ENCODE measurements at regions of chr15 and their contacts with region 1.

Region 1: DNA sequence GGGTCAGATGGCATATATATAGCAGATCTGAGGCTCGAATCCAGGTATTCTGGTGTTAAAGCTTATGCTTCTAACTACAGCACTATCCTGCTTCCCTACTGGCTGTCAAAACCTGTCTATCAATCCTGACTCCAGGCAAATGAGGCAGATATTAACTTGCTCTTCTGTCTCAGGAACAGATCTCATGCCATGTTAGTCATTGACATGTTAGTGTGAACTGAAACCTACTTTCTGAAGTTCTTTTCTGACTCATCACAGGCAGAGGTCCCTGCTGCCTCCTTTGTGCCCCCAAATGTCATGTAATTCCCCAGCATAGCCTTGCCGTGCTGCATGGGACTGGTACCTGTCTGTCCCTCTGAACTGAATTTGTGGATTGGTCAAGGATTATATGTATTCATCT is 125.0 kb upstream of the SMAD3 start:
- DNase-seq: peak in 1 of 7 donors; percentile 2
- H3K4me3 ChIP-seq: no peak overlapping the region
- H3K27ac ChIP-seq: no peak overlapping the region
- H3K4me1 ChIP-seq: peaks cover 0 to 3% of the 10 kb centered on the region in 2 donors
- H3K27me3 ChIP-seq: no peaks in the 10 kb centered on the region
- CTCF ChIP-seq: no peak
- POLR2A ChIP-seq: no peak

Region 2: DNA sequence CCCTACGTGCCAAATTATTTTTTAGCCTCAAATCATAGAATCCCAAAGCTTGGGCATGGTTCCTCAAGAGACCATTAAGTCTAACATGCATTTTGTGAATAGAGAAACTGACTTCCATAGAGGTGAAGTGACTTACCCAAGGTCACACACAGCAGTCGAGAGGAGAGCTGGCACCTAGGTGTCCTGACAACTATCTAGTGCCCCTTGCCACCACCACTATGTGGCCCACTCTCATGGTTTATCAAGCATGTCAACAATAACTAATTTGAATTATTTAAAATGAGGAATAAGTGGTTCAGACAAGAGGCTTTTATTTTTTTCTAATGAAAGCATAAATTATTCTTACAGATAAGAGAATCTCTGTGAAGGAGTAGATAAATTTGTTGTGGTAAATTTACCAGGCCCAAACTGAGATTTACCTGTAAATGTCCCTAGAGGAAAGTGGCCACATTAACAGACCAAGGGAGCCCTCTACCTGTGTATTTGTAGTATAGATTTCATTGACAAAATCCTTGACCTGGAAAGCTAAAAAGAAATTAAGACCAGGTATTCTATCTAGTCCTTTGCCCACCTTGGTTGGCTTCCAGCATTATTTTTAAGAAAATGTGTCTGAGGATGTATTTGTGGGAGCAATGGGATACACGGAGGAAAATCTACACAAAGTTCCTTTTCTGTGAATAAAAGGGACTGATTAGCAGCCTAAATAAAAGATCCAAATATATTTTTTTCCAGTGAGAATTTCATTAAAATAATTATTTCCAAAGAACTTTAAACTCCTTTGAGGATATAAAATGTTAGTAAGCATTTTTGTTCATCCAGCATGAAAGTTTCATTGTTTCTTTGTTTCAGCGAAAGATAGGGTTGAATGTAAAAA is 363.4 kb after region 1 on chr15:
- intact Hi-C with region 1: loop called (anchors 5 to 10 kb)
- DNase-seq: peak in 3 of 7 donors; percentile 7 to 16 (median 13)
- H3K4me3 ChIP-seq: no peak overlapping the region
- H3K27ac ChIP-seq: no peak overlapping the region
- H3K4me1 ChIP-seq: no peaks in the 10 kb centered on the region
- H3K27me3 ChIP-seq: no peaks in the 10 kb centered on the region
- CTCF ChIP-seq: peak; percentile 13 to 65 (median 56)
- POLR2A ChIP-seq: no peak

Measured in adrenal gland (tissue), 19 donors.